ENCODE measurements at regions of chr2 and their contacts with region 1.

Region 1: GRCh38 chr2:125004091-125004800 is 979.2 kb downstream of the CNTNAP5 start:
- DNase-seq: no peak
- ATAC-seq: no peak

Region 2: DNA sequence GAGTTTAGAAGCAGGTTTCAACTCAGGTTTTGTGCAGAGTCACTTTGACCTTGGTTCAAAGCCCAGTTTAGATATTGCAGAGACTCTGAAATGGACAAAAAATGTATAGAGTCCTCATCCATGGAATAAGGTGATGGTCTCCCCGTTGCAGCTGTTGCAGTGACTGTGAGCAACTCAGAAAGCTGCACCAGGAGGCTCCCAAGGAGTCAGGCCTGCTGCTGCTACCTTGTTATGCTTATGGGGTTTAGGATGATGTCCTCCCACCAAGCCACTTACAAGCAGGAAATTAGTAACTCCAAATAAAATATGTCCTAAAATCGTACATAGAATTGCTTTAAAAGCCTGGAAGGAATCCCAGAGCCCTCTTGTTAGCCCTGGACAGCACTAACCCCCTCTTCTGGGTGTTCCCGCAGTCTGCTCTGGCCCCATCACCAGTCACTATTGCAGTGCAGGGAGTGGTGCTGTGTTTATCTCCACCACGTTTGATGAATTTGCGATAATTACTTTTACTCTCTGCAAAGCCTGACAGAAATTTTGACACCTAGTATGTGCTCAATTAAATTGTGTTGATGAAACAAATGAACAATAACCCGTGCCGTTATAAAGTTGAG is 790.2 kb before region 1 on chr2:
- intact Hi-C with region 1: no loop called
- DNase-seq: no peak
- ATAC-seq: no peak

Region 3: GRCh38 chr2:124633812-124634211 is 370.4 kb before region 1 on chr2:
- intact Hi-C with region 1: loop called (anchors 5 kb)
- DNase-seq: no peak
- ATAC-seq: no peak

Region 4: DNA sequence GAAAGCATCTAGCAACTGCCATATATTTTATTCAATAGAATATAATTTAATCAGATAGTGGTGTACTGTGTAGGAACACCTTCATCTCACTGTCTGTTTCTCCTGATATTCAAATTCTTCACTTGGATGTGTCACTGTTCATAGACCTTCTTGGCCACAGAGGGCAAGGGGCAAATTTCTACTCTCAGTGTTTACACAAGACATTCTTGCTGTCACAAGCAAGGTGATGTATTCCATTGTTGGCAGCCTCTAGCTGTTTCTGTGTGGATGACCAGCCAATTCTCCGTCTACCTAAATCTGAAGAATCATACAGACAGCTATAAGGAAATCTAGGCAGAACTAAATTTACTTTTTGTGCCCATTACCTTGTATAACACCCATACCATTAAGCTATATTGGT is 30.9 kb before region 1 on chr2:
- intact Hi-C with region 1: no loop called
- DNase-seq: no peak
- ATAC-seq: no peak

Region 5: GRCh38 chr2:126571403-126571802 is 1567.2 kb after region 1 on chr2:
- intact Hi-C with region 1: no loop called
- DNase-seq: no peak
- ATAC-seq: no peak

Measured in sciatic nerve (tissue), 2 donors.